A549 (cell line): ENCODE measurements at regions of chr16 and their contacts with region 1.

Region 1: GRCh38 chr16:81537721-81538561 is 93.3 kb downstream of the CMIP start:
- DNase-seq: no peak
- ATAC-seq: no peak
- H3K4me3 ChIP-seq: no peak overlapping the region
- H3K27ac ChIP-seq: peak overlapping the region; percentile 6 to 58; a peak in 4 of 6 replicates
- H3K4me1 ChIP-seq: peaks cover 94% of the 10 kb centered on the region
- CTCF ChIP-seq: no peak
- EP300 ChIP-seq: no peak
- POLR2A ChIP-seq: no peak
- RAD21 ChIP-seq: no peak

Region 2: DNA sequence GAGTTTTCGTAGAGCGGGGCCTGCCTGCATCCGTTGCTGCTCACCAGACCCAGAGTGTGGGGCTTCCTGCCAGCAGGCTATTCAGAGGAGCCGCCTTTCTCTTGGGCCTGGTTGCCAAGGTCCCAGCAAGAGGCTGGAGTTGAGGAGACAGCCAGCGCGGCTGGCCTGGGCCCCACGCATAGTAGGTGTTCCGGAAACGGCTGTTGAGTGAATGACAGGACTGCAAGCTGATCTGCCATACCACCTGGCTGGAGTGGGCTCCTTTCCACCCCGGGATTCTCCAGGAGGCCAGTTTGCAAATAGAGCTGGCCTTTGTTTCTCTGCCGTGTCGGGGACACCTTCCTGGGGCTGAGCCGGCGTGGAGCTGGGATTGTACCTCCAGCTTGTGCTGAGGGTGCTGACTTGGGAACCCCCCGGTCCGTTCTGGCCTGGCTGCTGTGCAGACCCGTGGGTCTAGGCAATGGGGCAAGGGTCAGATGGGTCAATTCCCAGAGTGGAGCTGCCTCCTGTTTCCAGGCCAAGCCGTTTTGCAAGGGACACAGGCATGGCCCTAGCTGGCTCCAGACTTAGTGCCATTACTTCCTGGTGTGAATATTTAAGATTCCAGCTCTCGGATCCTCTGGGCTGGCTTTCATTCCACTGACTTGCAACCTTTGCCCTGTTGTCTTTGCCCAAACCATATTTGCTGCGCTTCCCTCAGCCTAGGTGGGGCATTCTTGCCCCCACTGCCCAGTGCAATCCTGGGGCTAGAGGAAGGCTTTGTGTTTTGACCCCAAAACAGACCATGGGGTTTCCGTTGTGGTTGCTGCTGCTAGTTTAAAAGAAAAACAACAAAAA is 24.5 kb before region 1 on chr16:
- CTCF ChIA-PET with region 1: no interaction called
- POLR2A ChIA-PET with region 1: no interaction called
- DNase-seq: peak in 1 of 2 experiments; percentile 68
- ATAC-seq: peak; percentile 31 to 75; a peak in 4 of 6 replicates
- H3K4me3 ChIP-seq: no peak overlapping the region
- H3K27ac ChIP-seq: peak overlapping the region; percentile 71 to 92
- H3K4me1 ChIP-seq: peaks cover 78% of the 10 kb centered on the region
- CTCF ChIP-seq: no peak
- EP300 ChIP-seq: no peak; a peak in 1 of 5 replicates
- POLR2A ChIP-seq: no peak
- RAD21 ChIP-seq: no peak

Region 3: DNA sequence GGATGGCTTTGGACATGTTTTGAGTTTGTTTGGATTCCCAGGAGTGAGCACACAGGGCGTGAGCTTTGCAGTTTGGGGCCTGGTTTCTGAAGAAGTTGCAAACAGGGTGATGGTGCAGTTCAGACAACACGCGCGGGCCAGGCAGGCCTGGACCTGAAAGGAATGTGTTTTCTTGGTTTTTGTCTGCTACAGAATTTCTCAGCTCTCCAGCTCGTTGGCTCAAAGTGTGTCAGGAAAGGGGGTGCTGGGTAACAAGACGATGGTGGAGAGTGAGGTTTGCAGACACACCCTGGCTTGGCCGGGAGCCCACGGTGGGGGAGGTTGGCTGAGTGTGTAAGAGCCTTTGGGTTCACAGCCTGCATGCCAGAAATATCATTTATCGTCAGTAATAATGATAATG is 11.0 kb before region 1 on chr16:
- CTCF ChIA-PET with region 1: interaction called, 10 read pairs
- POLR2A ChIA-PET with region 1: no interaction called
- DNase-seq: peak in 1 of 2 experiments; percentile 53
- ATAC-seq: peak in 1 of 2 experiments; percentile 13; a peak in 1 of 6 replicates
- H3K4me3 ChIP-seq: no peak overlapping the region
- H3K27ac ChIP-seq: peak overlapping the region; percentile 61 to 79
- H3K4me1 ChIP-seq: peaks cover 100% of the 10 kb centered on the region
- CTCF ChIP-seq: no peak
- EP300 ChIP-seq: no peak
- POLR2A ChIP-seq: no peak
- RAD21 ChIP-seq: no peak